ENCODE measurements at regions of chr1 and their contacts with region 1.

Region 1: GRCh38 chr1:60942896-60943638 is 139.3 kb upstream of the NFIA start:
- DNase-seq: peak in 1 of 2 experiments; percentile 12
- H3K4me3 ChIP-seq: no peak overlapping the region
- H3K27ac ChIP-seq: peak overlapping the region; percentile 54
- H3K4me1 ChIP-seq: peaks cover 29% of the 10 kb centered on the region
- H3K27me3 ChIP-seq: no peaks in the 10 kb centered on the region
- CTCF ChIP-seq: no peak

Region 2: GRCh38 chr1:60874716-60875115 is 68.4 kb before region 1 on chr1:
- CTCF ChIA-PET with region 1: no interaction called
- POLR2A ChIA-PET with region 1: no interaction called
- intact Hi-C with region 1: loop called (anchors 5 kb)
- DNase-seq: peak; percentile 25 to 67
- H3K4me3 ChIP-seq: no peak overlapping the region
- H3K27ac ChIP-seq: no peak overlapping the region
- H3K4me1 ChIP-seq: 0 out of 2 replicates have a peak, but pooled peaks cover 6% of the 10 kb centered on the region
- H3K27me3 ChIP-seq: no peaks in the 10 kb centered on the region
- CTCF ChIP-seq: no peak

Region 3: DNA sequence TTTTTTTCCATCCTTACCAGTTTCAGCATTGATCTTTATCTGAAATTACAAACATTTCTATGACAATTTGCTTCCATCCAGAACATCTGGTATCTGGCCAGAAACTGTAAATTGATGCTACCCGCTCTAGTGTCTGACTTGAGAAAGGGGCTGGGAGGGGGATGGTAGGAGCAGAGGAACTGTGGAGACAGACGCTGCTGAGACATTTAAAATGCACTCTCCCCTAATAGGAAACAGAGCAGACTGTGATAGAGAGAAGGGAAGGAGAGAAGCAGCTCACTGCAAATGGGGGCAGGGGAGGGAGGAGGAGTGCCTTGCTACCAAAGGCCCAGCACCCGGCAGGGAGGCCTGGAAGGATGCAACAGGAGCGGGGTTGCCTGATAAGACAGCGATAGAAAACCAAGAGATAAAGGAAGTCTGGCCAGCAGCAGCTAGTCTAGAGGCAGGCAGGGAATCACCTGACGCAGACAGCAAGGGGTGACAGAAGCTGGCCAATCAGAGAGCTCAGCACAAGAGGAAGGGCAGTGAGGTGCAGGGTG is 56.2 kb before region 1 on chr1:
- CTCF ChIA-PET with region 1: no interaction called
- POLR2A ChIA-PET with region 1: no interaction called
- intact Hi-C with region 1: no loop called
- DNase-seq: no peak
- H3K4me3 ChIP-seq: no peak overlapping the region
- H3K27ac ChIP-seq: no peak overlapping the region
- H3K4me1 ChIP-seq: no peaks in the 10 kb centered on the region
- H3K27me3 ChIP-seq: no peaks in the 10 kb centered on the region
- CTCF ChIP-seq: no peak

Region 4: DNA sequence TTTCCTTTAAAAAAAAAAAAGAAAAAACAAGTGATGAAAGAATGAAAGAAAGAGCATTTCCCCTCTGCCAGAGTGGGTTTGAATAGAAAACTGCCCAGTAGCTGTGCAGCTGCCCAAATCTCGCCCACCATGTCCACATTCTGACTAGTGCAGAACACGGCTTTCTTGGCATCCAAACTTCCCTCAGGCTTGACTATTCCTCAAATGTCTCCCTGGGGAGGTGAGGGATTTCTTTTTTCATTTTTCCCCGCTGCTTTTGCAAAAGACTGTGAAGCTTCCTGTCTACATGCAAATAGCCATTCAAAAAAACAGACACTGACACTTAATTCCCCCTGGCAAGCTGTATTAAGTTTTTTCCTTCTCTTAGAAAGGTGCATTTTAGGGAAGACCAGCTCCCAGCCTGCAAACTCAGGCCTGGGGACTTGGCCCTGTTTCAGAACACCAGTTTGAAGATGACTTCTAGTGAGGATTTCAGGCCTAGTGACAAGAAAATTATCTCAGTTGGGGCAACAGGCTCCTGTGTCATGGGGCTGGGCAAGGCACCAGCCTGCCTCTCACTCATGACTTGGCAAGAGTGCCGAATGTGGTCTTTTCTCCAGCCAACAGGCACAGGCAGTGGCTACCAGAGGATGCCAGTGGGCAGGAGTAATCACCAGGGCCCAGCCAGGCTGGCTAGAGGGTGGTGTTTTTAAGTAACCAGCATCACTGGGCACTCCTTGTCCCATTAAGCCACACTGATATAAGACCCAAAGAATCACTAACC is 38.8 kb before region 1 on chr1:
- CTCF ChIA-PET with region 1: no interaction called
- POLR2A ChIA-PET with region 1: no interaction called
- intact Hi-C with region 1: loop called (anchors 5 kb)
- DNase-seq: no peak
- H3K4me3 ChIP-seq: no peak overlapping the region
- H3K27ac ChIP-seq: no peak overlapping the region
- H3K4me1 ChIP-seq: 0 out of 2 replicates have a peak, but pooled peaks cover 8% of the 10 kb centered on the region
- H3K27me3 ChIP-seq: no peaks in the 10 kb centered on the region
- CTCF ChIP-seq: no peak

Region 5: GRCh38 chr1:62076286-62076685 is 1133.2 kb after region 1 on chr1:
- CTCF ChIA-PET with region 1: no interaction called
- POLR2A ChIA-PET with region 1: no interaction called
- intact Hi-C with region 1: no loop called
- DNase-seq: peak; percentile 10 to 50
- H3K4me3 ChIP-seq: no peak overlapping the region
- H3K27ac ChIP-seq: no peak overlapping the region
- H3K4me1 ChIP-seq: no peaks in the 10 kb centered on the region
- H3K27me3 ChIP-seq: no peaks in the 10 kb centered on the region
- CTCF ChIP-seq: no peak

Measured in PC-9 (cell line).